Caco-2 (cell line): ENCODE measurements at regions of chr22 and their contacts with region 1.

Region 1: GRCh38 chr22:46108564-46109473 is 41.5 kb upstream of the PPARA start:
- DNase-seq: peak; percentile 40 to 60
- H3K4me3 ChIP-seq: no peak overlapping the region
- H3K4me3 Mint-ChIP-seq: no peak overlapping the region
- H3K27ac Mint-ChIP-seq: peak overlapping the region; percentile 56
- H3K4me1 ChIP-seq: peaks cover 72% of the 10 kb centered on the region
- H3K4me1 Mint-ChIP-seq: peaks cover 18% of the 10 kb centered on the region
- H3K27me3 ChIP-seq: no peaks in the 10 kb centered on the region
- H3K27me3 Mint-ChIP-seq: no peaks in the 10 kb centered on the region
- CTCF ChIP-seq: no peak

Region 2: GRCh38 chr22:46006379-46007002 is 102.3 kb before region 1 on chr22:
- CTCF ChIA-PET with region 1: interaction called, 97 read pairs
- POLR2A ChIA-PET with region 1: no interaction called
- intact Hi-C with region 1: no loop called
- DNase-seq: peak; percentile 89 to 90
- H3K4me3 ChIP-seq: no peak overlapping the region
- H3K4me3 Mint-ChIP-seq: no peak overlapping the region
- H3K27ac Mint-ChIP-seq: no peak overlapping the region
- H3K4me1 ChIP-seq: peaks cover 8% of the 10 kb centered on the region; the same call in 1 of the 2 replicates
- H3K4me1 Mint-ChIP-seq: no peaks in the 10 kb centered on the region
- H3K27me3 ChIP-seq: no peaks in the 10 kb centered on the region
- H3K27me3 Mint-ChIP-seq: no peaks in the 10 kb centered on the region
- CTCF ChIP-seq: peak; percentile 87 to 90

Region 3: GRCh38 chr22:46071451-46072109 is 37.2 kb before region 1 on chr22:
- CTCF ChIA-PET with region 1: no interaction called
- POLR2A ChIA-PET with region 1: interaction called, 7 read pairs
- intact Hi-C with region 1: loop called (anchors 5 kb)
- DNase-seq: peak; percentile 36
- H3K4me3 ChIP-seq: peak overlapping the region; percentile 60
- H3K4me3 Mint-ChIP-seq: peak overlapping the region; percentile 72
- H3K27ac Mint-ChIP-seq: no peak overlapping the region
- H3K4me1 ChIP-seq: peaks cover 5% of the 10 kb centered on the region; the same call in 1 of the 2 replicates
- H3K4me1 Mint-ChIP-seq: no peaks in the 10 kb centered on the region
- H3K27me3 ChIP-seq: no peaks in the 10 kb centered on the region; the same call in none of the 2 replicates
- H3K27me3 Mint-ChIP-seq: peaks cover 14% of the 10 kb centered on the region
- CTCF ChIP-seq: no peak

Region 4: GRCh38 chr22:46087336-46088277 is 21.2 kb before region 1 on chr22:
- CTCF ChIA-PET with region 1: no interaction called
- POLR2A ChIA-PET with region 1: no interaction called
- intact Hi-C with region 1: no loop called
- DNase-seq: peak in 1 of 2 experiments; percentile 35
- H3K4me3 ChIP-seq: no peak overlapping the region
- H3K4me3 Mint-ChIP-seq: no peak overlapping the region
- H3K27ac Mint-ChIP-seq: no peak overlapping the region
- H3K4me1 ChIP-seq: peaks cover 18% of the 10 kb centered on the region
- H3K4me1 Mint-ChIP-seq: peaks cover 6% of the 10 kb centered on the region
- H3K27me3 ChIP-seq: no peaks in the 10 kb centered on the region
- H3K27me3 Mint-ChIP-seq: no peaks in the 10 kb centered on the region
- CTCF ChIP-seq: no peak